GM23248 (cell line): ENCODE measurements at regions of chr15 and their contacts with region 1.

Region 1: DNA sequence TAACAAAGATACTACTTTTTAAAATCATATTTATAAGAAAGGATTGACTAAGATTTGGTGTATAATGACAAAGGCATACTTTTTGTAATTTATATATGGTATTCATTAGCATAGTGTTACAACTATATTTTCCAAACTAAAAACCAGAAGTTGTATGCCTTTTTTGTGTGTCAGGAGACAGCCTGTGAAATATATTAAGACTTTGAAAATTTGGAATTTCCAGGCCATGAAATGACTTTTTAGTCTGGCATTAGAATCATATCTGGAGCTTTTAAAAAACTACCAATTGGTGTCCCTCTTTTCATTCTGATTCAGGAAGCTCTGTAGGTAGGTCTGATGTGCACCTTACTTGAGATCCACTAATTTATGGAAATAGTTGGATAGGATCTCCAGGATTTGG is 41.9 kb downstream of the CALML4 start:
- DNase-seq: no peak
- H3K4me3 ChIP-seq: no peak overlapping the region
- H3K27ac ChIP-seq: no peak overlapping the region
- H3K4me1 ChIP-seq: peaks cover 2% of the 10 kb centered on the region
- H3K27me3 ChIP-seq: no peaks in the 10 kb centered on the region

Region 2: DNA sequence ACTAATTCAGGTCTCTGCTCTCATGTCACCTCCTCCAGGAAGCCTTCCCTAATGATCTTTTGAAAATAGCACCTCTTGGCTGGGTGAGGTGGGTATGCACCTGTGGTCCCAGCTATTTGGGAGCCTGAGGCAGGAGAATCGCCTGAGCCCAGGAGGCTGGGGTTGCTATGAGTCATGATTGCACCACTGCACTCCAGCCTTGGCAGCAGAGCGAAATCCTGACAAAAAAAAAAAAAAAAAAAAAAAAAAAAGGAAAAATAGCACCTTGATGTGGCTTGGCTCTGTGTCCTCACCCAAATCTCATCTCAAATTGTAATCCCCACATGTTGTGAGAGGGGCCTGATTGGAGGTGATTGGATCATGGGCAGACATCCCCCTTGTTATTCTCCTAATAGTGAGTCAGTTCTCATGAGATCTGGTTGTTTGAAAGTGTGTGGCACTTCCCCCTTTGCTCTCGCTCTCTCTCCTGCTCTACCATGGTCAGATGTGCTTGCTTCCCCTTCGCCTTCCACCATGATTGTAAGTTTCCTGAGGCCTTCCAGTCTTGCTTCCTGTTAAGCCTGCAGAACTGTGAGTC is 312.1 kb before region 1 on chr15:
- in situ Hi-C with region 1: loop called (anchors 10 kb)
- DNase-seq: peak; percentile 70
- H3K4me3 ChIP-seq: no peak overlapping the region
- H3K27ac ChIP-seq: no peak overlapping the region
- H3K4me1 ChIP-seq: no peaks in the 10 kb centered on the region
- H3K27me3 ChIP-seq: no peaks in the 10 kb centered on the region